Activated naive CD4-positive, alpha-beta T cell treated with anti-CD3 and anti-CD28 coated beads for 36 hours (primary cell): ENCODE measurements at regions of chr13 and their contacts with region 1.

Region 1: GRCh38 chr13:100514788-100515409 is 73.7 kb downstream of the GGACT start:
- DNase-seq: peak; percentile 85
- H3K4me3 Mint-ChIP-seq: no peak overlapping the region
- H3K27ac Mint-ChIP-seq: no peak overlapping the region
- H3K4me1 Mint-ChIP-seq: peaks cover 9% of the 10 kb centered on the region
- H3K27me3 Mint-ChIP-seq: no peaks in the 10 kb centered on the region

Region 2: GRCh38 chr13:99900960-99901359 is 613.9 kb before region 1 on chr13:
- CTCF ChIA-PET with region 1: interaction called, 4 read pairs
- intact Hi-C with region 1: loop called (anchors 1 kb)
- DNase-seq: no peak
- H3K4me3 Mint-ChIP-seq: no peak overlapping the region
- H3K27ac Mint-ChIP-seq: no peak overlapping the region
- H3K4me1 Mint-ChIP-seq: no peaks in the 10 kb centered on the region
- H3K27me3 Mint-ChIP-seq: peaks cover 50% of the 10 kb centered on the region

Region 3: DNA sequence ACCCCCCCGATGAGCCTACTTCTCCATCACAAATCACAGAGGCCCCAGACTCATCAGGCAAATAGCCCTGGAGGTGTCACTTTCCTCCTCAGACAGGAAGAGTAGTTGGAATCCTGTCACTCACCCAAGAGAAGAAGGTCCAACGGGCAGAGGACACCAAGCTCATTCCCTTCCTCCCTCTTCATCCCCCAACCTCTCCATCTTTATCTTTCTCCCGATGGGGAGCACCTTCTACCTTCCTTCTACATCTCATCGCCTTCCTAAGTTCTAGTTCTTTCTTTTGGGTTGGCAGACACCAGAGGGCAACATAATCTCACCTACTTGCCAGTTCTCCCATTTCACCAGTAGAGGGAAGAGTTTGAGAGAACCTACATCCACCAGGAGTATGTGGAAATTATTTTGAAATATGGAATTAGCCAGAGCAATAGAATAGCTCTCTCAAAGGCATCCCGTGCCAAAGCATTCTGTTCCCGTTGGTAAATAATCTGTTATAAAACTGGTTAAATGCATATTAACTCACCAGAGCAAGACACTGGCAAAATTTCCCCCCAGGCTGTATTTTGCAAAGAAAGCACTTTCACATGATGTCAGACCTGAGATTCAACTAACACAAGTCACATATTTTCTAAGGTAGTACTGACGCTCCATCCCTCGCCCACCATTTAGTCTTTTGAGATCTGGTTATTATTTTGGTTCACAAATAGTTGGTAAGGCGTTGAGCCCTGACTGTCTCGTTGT is 598.4 kb before region 1 on chr13:
- CTCF ChIA-PET with region 1: interaction called, 13 read pairs
- intact Hi-C with region 1: loop called (anchors 1 kb)
- DNase-seq: peak; percentile 40
- H3K4me3 Mint-ChIP-seq: no peak overlapping the region
- H3K27ac Mint-ChIP-seq: no peak overlapping the region
- H3K4me1 Mint-ChIP-seq: peaks cover 7% of the 10 kb centered on the region
- H3K27me3 Mint-ChIP-seq: peaks cover 9% of the 10 kb centered on the region

Region 4: DNA sequence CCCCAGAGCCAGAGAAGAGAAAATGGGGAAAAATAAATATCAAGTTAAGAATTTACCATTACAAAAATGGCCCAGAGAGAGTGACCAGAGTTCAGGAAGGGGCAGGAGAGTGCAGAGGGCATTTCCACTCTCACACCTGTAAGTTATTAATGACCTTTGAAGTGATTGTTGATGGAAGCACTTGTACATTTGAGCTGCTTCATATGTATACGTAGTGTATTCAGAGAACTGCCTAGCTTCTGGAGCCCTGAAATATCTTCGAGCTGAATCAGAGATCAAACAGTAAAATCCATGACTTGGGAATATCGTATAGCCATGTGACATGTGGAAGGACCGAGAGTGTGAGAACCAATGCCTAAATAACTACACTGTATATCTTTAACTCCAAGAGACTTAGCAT is 475.2 kb before region 1 on chr13:
- CTCF ChIA-PET with region 1: interaction called, 8 read pairs
- intact Hi-C with region 1: loop called (anchors 2 kb)
- DNase-seq: no peak
- H3K4me3 Mint-ChIP-seq: no peak overlapping the region
- H3K27ac Mint-ChIP-seq: no peak overlapping the region
- H3K4me1 Mint-ChIP-seq: no peaks in the 10 kb centered on the region
- H3K27me3 Mint-ChIP-seq: no peaks in the 10 kb centered on the region

Region 5: DNA sequence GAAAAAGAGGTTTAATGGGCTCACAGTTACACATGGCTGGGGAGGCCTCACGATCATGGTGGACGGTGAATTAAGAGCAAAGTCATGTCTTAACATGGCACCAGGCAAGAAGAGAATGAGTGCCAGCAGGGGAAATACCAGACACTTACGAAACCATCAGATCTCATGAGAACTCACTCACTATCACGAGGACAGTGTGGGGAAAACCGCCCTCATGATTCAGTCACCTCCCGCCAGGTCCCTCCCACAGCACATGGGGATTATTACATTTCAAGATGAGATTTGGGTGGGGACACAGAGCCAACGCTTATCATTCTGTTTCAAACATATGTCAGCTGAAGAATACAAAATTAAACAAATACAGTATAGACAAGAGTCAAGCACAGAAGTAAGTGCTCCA is 260.9 kb before region 1 on chr13:
- CTCF ChIA-PET with region 1: no interaction called
- intact Hi-C with region 1: loop called (anchors 5 kb)
- DNase-seq: no peak
- H3K4me3 Mint-ChIP-seq: no peak overlapping the region
- H3K27ac Mint-ChIP-seq: no peak overlapping the region
- H3K4me1 Mint-ChIP-seq: no peaks in the 10 kb centered on the region
- H3K27me3 Mint-ChIP-seq: no peaks in the 10 kb centered on the region

Region 6: GRCh38 chr13:100338275-100338674 is 176.6 kb before region 1 on chr13:
- CTCF ChIA-PET with region 1: no interaction called
- intact Hi-C with region 1: no loop called
- DNase-seq: no peak
- H3K4me3 Mint-ChIP-seq: no peak overlapping the region
- H3K27ac Mint-ChIP-seq: no peak overlapping the region
- H3K4me1 Mint-ChIP-seq: peaks cover 17% of the 10 kb centered on the region
- H3K27me3 Mint-ChIP-seq: no peaks in the 10 kb centered on the region

Region 7: GRCh38 chr13:100560498-100561157 is 45.7 kb after region 1 on chr13:
- CTCF ChIA-PET with region 1: no interaction called
- intact Hi-C with region 1: no loop called
- DNase-seq: no peak
- H3K4me3 Mint-ChIP-seq: no peak overlapping the region
- H3K27ac Mint-ChIP-seq: no peak overlapping the region
- H3K4me1 Mint-ChIP-seq: no peaks in the 10 kb centered on the region
- H3K27me3 Mint-ChIP-seq: no peaks in the 10 kb centered on the region

Region 8: DNA sequence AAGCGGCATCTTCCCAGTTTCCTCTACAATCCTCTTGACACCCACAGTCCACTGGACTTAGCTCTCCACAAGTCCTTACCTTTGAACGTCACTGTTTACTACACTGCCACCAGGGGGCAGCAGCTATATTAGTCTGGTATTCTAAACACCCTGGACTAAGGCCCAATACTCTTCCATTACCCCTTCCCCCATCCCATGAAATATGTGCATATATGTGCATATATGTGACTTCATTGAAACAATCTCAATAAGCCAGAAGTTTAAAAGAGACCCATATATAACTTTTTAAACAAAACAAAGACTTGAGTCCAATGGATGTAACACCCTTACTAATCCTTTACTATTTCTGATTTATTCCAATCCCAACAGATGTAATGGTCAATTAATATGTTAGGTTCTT is 58.2 kb after region 1 on chr13:
- CTCF ChIA-PET with region 1: no interaction called
- intact Hi-C with region 1: no loop called
- DNase-seq: peak; percentile 88
- H3K4me3 Mint-ChIP-seq: no peak overlapping the region
- H3K27ac Mint-ChIP-seq: no peak overlapping the region
- H3K4me1 Mint-ChIP-seq: peaks cover 13% of the 10 kb centered on the region
- H3K27me3 Mint-ChIP-seq: no peaks in the 10 kb centered on the region

Region 9: DNA sequence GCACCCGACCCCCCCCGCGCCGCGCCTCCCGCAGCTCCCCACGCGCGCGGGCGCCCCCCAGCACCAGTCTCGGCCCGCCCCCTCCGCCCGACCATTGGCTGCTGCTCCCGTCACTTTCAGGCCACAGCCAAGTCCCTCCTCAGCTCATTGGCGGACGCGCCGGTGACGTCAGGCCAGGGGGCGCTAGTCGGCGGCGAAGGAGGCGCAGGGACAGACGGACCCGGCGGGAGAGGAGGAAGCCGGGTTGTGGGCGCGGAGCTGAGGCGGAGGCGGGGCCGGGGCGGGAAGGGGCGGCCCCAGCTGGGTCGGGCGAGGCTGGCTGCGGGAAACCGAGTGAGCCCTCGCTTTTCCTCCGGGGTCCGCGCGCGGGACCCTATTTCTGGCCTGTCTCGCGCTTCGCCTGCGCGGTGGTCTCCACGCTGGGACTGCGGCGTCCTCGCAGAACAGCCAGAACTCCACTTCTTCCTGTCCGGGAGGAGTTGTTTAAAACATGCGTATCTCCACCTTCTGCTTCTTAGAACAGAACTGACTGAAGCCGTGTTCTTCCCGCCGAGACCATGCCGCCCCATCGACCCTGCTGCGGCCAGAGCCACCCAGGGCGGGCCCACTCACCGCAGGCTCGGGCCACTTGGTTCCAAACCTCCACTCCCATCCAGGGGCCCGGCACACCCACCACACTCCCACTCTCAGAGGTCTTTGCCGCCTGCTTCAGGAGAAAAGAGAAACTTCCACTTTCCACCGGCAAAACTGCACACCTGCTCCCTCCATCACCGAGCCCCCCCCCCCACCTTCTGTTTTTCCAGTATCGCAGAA is 160.2 kb after region 1 on chr13:
- CTCF ChIA-PET with region 1: no interaction called
- intact Hi-C with region 1: no loop called
- DNase-seq: peak; percentile 99
- H3K4me3 Mint-ChIP-seq: peak overlapping the region; percentile 76
- H3K27ac Mint-ChIP-seq: peak overlapping the region; percentile 20
- H3K4me1 Mint-ChIP-seq: peaks cover 20% of the 10 kb centered on the region
- H3K27me3 Mint-ChIP-seq: no peaks in the 10 kb centered on the region